ENCODE measurements at regions of chr11 and their contacts with region 1.

Region 1: DNA sequence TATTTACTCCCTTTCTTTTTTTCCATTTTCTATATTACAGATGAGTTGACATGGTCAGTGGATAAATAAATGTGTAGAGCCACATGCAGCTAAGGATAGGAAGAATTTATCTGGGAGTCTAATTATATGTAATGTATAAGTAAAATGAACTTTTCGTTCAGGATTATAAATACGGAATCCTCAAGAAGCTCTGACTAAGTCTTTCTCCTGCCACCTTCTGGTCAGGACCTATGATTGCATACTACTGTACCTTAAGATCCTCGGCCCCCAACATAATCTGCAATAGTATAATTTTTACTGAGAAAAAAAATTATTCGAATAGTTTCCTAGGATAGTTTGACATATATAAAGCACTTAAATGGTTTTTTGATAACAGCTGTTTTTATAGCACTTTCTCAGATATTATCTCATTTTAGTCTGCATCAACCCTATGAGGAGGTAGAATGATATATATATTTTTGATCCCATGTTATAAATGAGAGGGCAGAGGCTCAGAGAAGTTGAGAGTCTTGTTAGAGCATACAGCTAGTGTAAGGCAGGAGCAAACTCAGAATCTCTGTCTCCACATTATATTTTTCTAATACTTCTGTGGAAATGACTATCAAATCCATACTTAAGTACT is 36.1 kb downstream of the CCDC90B start:
- DNase-seq: peak; percentile 29
- H3K4me3 ChIP-seq: no peak overlapping the region
- H3K27ac ChIP-seq: no peak overlapping the region
- H3K27me3 ChIP-seq: no peaks in the 10 kb centered on the region
- CTCF ChIP-seq: peak; percentile 76

Region 2: DNA sequence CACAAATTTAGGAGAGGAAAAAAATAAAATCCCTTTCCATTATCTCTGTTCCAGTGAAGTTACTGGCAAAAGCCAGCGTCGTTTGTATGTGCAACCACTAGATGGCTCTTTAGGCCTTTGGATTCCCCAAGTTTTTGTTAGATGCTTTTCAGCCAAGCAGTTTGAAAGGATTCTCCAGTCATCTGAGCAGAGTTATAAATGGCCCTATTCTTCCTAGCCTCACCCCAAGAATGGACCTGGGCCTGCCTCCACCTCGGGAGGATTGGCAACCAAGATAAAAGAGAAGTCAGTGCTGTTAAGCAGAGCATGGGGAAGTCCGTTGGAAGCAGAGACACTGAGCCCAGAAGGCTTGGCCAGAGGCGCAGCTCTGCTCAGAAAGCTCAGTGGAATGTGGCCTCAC is 531.8 kb before region 1 on chr11:
- CTCF ChIA-PET with region 1: interaction called, 11 read pairs
- POLR2A ChIA-PET with region 1: no interaction called
- DNase-seq: peak; percentile 20
- H3K4me3 ChIP-seq: no peak overlapping the region
- H3K27ac ChIP-seq: no peak overlapping the region
- H3K27me3 ChIP-seq: peaks cover 4% of the 10 kb centered on the region
- CTCF ChIP-seq: peak; percentile 83

Region 3: DNA sequence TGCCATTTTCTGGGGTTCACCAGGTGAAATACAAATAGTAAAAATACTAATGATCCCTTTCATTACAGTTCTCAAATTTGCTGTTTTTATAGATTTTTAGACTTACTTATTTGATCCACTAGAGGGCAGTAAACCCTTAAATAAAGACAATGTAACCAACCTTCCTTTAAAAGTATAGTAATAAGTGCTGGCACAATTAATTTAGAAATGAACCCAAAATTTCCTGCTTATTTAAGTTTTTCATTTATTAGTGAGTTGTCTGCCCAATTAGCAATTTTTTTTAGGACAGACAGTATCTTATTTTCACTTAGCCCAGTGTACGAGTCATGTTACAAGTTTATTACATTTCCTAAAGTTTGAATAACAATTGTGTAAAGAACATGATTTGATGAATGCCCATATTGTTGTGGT is 343.8 kb before region 1 on chr11:
- CTCF ChIA-PET with region 1: interaction called, 22 read pairs
- POLR2A ChIA-PET with region 1: no interaction called
- DNase-seq: no peak
- H3K4me3 ChIP-seq: no peak overlapping the region
- H3K27ac ChIP-seq: no peak overlapping the region
- H3K27me3 ChIP-seq: no peaks in the 10 kb centered on the region
- CTCF ChIP-seq: peak; percentile 45; the same call in 1 of the 2 replicates

Region 4: DNA sequence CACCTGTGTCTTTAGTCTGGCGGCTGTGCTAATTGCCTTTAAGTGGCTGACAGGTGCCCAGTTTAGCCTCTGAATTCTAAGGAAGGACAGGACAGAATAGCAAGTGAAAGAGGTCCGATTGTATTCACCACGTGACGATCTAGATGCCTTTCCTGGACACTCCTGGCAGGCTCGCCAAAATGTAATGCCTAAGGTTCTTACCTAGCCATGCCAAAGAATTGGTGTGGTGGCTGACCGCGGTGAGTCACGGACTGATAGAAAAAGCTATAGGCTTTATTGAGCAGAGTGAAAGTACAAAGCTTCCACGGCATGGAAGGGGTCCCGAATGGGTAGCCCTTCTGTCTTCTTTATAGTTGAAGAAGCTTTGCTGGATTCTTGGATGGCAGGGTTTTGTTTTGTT is 29.8 kb before region 1 on chr11:
- CTCF ChIA-PET with region 1: interaction called, 14 read pairs
- POLR2A ChIA-PET with region 1: no interaction called
- DNase-seq: no peak
- H3K4me3 ChIP-seq: no peak overlapping the region
- H3K27ac ChIP-seq: no peak overlapping the region
- H3K27me3 ChIP-seq: no peaks in the 10 kb centered on the region
- CTCF ChIP-seq: no peak

Region 5: GRCh38 chr11:83272627-83273026 is 22.5 kb after region 1 on chr11:
- CTCF ChIA-PET with region 1: interaction called, 29 read pairs
- POLR2A ChIA-PET with region 1: no interaction called
- DNase-seq: no peak
- H3K4me3 ChIP-seq: no peak overlapping the region
- H3K27ac ChIP-seq: no peak overlapping the region
- H3K27me3 ChIP-seq: no peaks in the 10 kb centered on the region
- CTCF ChIP-seq: no peak

Region 6: GRCh38 chr11:83355391-83355790 is 105.3 kb after region 1 on chr11:
- CTCF ChIA-PET with region 1: no interaction called
- POLR2A ChIA-PET with region 1: no interaction called
- DNase-seq: no peak
- H3K4me3 ChIP-seq: no peak overlapping the region
- H3K27ac ChIP-seq: no peak overlapping the region
- H3K27me3 ChIP-seq: no peaks in the 10 kb centered on the region
- CTCF ChIP-seq: no peak

Region 7: DNA sequence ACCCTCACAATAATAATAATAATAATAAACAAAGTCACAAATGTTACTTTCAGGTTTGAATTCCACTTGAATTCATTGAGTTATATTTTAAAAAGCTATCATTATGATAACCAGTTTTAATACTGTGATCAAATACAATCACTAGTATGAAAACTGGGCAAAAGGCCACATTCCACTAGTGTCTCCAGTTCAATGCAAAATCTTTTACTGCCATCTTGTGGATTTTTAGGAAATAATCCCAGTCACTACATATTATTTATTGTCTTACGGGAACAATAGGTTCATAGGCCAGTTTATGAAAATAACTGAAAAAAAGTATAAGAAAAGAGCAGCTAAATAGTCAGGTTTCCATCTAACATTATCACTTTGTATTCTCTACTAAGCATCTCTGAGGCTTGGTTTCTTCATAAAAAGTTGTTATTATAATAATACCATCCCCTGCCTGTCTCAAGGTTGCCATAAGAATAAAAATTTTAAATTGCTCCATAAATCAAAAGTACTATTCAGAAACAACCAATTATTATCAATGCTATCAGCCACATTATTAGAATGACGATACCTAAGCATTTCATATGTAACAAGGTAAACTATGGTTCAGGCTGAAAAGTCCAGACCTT is 570.0 kb after region 1 on chr11:
- CTCF ChIA-PET with region 1: interaction called, 25 read pairs
- POLR2A ChIA-PET with region 1: no interaction called
- DNase-seq: peak; percentile 52
- H3K4me3 ChIP-seq: no peak overlapping the region
- H3K27ac ChIP-seq: no peak overlapping the region
- H3K27me3 ChIP-seq: no peaks in the 10 kb centered on the region
- CTCF ChIP-seq: peak; percentile 58

Measured in AG04450 (cell line).